AG04449 (cell line): ENCODE measurements at regions of chr9 and their contacts with region 1.

Region 1: DNA sequence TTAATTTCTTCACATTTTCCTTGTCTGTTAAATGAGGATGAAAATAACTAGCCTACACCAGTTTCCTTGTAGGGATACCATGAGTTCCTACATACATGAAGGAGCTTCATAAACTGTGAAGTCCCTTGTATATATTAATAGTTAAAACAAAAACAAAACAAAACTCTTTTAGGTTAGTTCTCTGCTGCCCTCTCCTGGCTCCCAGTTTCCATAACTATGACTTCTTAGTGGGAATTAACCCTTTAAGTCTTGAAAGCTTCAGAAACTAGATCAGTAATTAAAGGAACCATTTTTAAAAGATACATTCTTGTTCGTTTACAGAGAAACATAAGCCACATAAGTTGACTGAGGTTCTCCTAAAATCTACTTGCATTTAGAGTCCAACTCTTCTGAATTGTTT is 500.0 kb upstream of the C9orf72 start:
- DNase-seq: no peak
- H3K4me3 ChIP-seq: no peak overlapping the region
- CTCF ChIP-seq: peak; percentile 36

Region 2: DNA sequence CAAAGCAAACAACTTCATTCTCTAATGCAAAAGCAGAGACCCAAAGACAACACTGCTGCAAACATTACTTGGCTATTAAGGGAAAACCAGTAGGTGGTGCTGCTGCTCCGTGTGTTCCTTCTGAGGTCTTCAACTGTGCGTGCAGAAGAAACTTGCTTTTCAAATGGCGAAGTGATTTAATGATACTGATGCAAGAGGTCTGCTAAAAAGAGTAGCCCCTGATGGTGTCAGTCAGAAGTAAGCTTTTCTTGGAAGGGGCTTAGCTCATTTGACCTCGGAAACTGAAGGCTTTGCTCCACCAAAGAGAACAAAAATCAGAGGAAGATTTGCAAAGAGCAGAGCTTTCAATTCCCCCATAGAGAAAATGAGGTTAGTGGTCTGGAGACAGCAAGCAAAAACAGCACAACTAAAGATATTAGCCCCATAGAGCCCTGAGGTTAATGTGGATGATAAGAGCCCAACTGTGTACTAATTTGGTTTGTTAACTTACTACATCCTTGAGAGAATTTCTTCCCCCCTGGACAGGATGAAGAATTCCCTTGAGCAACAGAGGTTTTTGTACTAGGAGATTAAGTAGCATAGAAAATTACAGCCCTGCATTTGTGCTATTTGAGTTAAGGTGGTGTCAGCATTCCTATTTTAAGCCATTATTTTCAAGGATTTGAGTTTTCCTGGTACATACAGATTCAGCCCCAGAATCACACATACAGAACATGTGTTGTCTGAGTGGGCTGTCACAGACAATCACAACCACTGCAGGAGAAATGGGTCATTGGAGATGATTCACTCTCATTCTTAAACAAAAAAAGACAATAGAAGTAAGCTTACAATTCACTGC is 346.8 kb before region 1 on chr9:
- CTCF ChIA-PET with region 1: interaction called, 13 read pairs
- POLR2A ChIA-PET with region 1: no interaction called
- DNase-seq: peak; percentile 2
- H3K4me3 ChIP-seq: no peak overlapping the region
- CTCF ChIP-seq: peak; percentile 79

Region 3: DNA sequence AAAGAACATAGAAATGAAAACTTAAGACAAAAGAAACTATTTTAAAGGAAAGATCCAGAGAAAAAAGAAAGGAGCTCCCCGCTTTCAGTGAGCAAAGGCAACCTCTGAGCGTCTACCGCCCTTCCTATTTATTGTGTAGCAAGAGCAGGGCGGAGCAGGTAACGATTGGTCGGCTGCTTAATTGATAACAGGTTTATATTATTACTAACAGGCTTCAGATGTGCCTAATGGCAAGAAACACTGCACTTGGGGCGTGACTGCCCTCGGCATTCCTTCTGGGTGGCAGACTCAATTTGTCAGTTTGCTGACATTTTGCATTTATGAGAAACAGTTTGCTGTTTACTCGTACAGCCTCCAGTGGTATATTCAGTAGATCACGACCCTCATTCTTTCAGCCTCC is 17.3 kb before region 1 on chr9:
- CTCF ChIA-PET with region 1: no interaction called
- POLR2A ChIA-PET with region 1: no interaction called
- DNase-seq: no peak
- H3K4me3 ChIP-seq: no peak overlapping the region
- CTCF ChIP-seq: no peak